A673 (cell line): ENCODE measurements at regions of chr3 and their contacts with region 1.

Region 1: DNA sequence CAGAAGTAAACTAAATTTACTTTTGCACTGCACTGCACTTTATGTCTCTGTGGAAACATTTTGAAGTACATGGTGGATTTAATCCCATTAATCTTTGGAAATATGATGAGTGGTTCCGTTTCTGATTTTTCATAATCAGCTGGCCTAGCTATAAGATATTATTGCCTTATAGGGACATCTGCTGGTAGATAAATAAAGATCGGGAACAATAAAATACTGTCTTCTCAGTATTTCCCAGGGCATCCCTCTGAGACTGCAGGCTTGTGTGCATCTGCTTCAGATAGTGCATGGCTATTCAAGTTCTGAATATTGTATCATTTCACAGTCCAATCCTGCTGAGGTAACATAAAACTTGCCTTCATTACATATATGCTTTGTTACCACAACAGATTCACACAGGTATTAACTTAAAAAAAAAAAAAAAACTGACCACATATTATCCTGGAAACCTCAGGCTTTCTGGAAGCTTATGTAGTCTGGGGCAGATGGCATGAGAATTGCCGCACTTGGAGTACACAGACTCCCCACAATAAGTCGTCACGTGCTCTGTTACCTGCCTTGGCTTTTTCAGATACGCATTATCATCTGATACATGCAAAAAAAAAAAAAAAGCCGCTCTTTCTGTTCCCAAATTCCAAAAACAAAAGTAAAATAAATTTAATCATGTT is 330.8 kb upstream of the AGTR1 start:
- DNase-seq: peak; percentile 35
- H3K4me3 ChIP-seq: no peak overlapping the region
- H3K27ac ChIP-seq: no peak overlapping the region
- H3K4me1 ChIP-seq: no peaks in the 10 kb centered on the region
- H3K27me3 ChIP-seq: no peaks in the 10 kb centered on the region
- CTCF ChIP-seq: peak; percentile 44; the same call in 1 of the 2 replicates

Region 2: GRCh38 chr3:148309390-148310035 is 57.4 kb before region 1 on chr3:
- CTCF ChIA-PET with region 1: no interaction called
- POLR2A ChIA-PET with region 1: no interaction called
- intact Hi-C with region 1: loop called (anchors 5 kb)
- DNase-seq: peak; percentile 72
- H3K4me3 ChIP-seq: no peak overlapping the region
- H3K27ac ChIP-seq: no peak overlapping the region
- H3K4me1 ChIP-seq: no peaks in the 10 kb centered on the region
- H3K27me3 ChIP-seq: no peaks in the 10 kb centered on the region
- CTCF ChIP-seq: peak; percentile 74